H1 (cell line): ENCODE measurements at regions of chr19 and their contacts with region 1.

Region 1: DNA sequence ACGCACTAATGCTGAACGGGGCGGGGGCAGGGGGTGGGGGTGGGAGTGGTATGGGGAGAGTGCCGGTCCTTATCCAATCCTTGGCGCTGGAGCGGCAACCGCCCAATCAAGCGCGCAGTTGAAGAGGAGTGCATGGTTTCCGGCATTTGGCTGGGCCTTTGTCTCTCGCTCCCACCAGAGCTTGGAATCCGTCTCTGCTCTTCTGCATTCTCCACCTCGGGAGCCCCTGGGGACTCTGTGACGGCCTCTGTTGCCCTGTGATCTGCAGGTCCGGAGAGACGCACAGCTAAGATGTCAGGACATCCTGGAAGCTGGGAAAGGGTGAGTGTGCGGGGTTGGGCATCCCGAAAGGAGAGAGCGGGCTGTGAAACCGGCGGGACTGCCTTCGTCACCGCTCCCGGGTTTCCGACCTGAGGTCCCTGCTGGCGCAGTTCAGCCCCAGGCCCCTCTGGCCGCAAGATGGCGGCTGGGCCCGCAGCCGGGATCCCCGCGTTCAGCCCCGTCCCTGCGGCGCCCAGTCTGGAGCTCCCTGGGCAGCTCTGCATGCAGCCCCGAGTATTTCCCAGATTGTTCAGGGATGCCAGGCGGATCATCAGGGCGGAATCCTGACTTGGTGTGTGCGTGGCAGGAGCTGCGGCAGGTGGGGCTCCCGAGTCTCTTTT is 53.6 kb upstream of the ZNF254 start:
- DNase-seq: peak; percentile 70 to 84
- H3K4me3 ChIP-seq: peak overlapping the region; percentile 82 to 95 (median 88)
- H3K27ac ChIP-seq: peak overlapping the region; percentile 98
- H3K4me1 ChIP-seq: no peaks in the 10 kb centered on the region; a peak in 1 of 7 replicates
- H3K27me3 ChIP-seq: no peaks in the 10 kb centered on the region
- CTCF ChIP-seq: no peak
- EP300 ChIP-seq: no peak
- POLR2A ChIP-seq: peak; percentile 82 to 92
- RAD21 ChIP-seq: no peak

Region 2: DNA sequence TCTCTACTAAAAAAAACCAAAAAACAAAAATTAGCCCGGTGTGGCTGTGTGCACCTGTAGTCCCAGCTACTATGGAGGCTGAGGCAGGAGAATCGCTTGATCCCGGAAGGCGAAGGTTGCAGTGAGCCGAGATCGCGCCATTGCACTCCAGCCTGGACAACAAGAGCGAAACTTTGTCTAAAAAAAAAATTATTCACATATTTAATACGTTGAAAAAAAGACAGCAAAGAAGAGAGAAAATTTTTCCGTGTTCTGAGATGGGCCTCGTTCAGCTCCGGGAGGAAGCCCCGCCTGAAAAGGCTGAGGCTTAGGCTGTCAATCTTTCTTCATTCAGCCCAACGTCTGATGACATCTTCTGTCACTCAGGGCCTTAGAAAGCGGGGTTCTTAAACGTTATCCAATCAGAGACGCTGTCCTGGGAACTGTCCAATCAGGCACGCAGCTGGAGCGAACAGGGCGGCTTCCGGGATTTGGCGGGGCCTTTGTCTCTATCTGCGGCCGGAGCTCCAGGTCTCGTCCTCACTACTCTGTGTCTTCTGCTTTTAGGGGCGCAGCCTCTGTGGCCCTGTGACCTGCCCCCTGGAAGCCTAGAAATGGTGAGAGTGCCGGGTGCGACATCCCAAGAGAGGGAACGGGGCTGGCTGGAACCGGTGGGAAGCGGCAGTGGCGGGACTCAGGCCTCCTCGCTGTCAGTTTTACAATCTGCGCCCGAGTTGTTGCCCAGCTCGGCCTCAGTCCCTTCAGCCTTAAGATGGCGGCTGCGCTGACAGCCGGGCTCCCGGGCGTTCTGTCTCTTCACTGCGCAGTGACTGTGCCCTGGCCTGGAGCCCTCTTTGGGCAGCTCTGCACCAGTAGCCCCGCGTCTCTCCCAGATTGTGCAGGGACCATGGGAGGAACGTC is 118.8 kb before region 1 on chr19 and contains the start of gene ZNF726:
- CTCF ChIA-PET with region 1: no interaction called
- POLR2A ChIA-PET with region 1: interaction called, 11 read pairs
- DNase-seq: no peak
- H3K4me3 ChIP-seq: peak within 1 kb of the TSS in 1 of 4 experiments; percentile 47; a peak in 1 of 8 replicates
- H3K27ac ChIP-seq: no peak within 1 kb of the TSS
- H3K4me1 ChIP-seq: no peaks in the 10 kb centered on the region
- H3K27me3 ChIP-seq: no peaks in the 10 kb centered on the region
- CTCF ChIP-seq: no peak
- EP300 ChIP-seq: no peak
- POLR2A ChIP-seq: no peak
- RAD21 ChIP-seq: no peak
- total RNA-seq, gene ZNF726: not detected in 2 replicates

Region 3: DNA sequence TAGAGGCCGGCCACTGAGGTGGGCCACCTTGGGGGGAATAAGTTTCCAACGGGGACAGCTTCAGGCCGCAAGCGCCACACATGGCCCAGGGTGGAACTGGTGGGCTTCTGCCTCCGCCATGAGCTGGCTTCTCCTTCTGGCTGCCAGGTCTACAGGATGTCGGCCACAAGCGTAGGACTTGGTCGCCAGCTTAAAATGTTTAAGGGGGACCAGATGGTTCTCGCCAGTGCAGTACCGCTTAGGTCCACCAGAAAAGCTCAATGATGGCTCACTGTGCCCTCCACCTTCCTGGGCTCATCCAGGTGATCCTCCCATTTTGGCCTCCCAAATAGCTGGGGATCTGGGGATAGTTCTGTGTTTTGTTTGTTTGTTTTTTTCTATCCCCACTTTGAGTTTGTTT is 14.8 kb after region 1 on chr19:
- CTCF ChIA-PET with region 1: interaction called, 7 read pairs
- POLR2A ChIA-PET with region 1: interaction called, 29 read pairs
- DNase-seq: no peak
- H3K4me3 ChIP-seq: no peak overlapping the region
- H3K27ac ChIP-seq: no peak overlapping the region
- H3K4me1 ChIP-seq: no peaks in the 10 kb centered on the region
- H3K27me3 ChIP-seq: no peaks in the 10 kb centered on the region
- CTCF ChIP-seq: peak in 2 of 3 experiments; percentile 27 to 36; a peak in 2 of 4 replicates
- EP300 ChIP-seq: no peak
- POLR2A ChIP-seq: no peak
- RAD21 ChIP-seq: peak in 1 of 2 experiments; percentile 9; a peak in 1 of 4 replicates

Region 4: DNA sequence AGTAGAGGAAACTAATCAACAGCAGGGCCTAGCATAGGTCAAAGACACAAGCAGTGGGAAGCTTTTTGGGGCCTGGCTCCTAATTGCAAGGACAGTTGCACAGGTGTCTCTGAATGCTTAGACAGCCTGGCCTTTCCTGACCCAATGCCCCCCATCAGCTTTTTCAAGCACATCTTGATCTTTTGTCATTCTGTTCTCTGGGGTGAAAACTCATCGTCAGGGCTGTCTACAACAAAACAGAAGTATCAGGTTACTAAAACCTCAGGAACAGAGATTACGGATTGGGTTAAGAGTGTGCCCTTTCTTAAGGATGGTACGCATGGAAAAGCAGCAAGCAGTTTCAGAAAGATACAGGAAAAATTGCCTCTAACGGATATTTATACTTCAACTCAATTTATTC is 45.2 kb after region 1 on chr19:
- CTCF ChIA-PET with region 1: no interaction called
- POLR2A ChIA-PET with region 1: interaction called, 13 read pairs
- DNase-seq: peak in 1 of 2 experiments; percentile 10
- H3K4me3 ChIP-seq: peak overlapping the region in 3 of 4 experiments; percentile 1 to 46 (median 11); a peak in 1 of 8 replicates
- H3K27ac ChIP-seq: no peak overlapping the region; the same call in 1 of the 2 replicates
- H3K4me1 ChIP-seq: peaks cover 5 to 27% (median 13%) of the 10 kb centered on the region in 4 experiments
- H3K27me3 ChIP-seq: no peaks in the 10 kb centered on the region
- CTCF ChIP-seq: no peak
- EP300 ChIP-seq: no peak
- POLR2A ChIP-seq: no peak
- RAD21 ChIP-seq: no peak

Region 5: DNA sequence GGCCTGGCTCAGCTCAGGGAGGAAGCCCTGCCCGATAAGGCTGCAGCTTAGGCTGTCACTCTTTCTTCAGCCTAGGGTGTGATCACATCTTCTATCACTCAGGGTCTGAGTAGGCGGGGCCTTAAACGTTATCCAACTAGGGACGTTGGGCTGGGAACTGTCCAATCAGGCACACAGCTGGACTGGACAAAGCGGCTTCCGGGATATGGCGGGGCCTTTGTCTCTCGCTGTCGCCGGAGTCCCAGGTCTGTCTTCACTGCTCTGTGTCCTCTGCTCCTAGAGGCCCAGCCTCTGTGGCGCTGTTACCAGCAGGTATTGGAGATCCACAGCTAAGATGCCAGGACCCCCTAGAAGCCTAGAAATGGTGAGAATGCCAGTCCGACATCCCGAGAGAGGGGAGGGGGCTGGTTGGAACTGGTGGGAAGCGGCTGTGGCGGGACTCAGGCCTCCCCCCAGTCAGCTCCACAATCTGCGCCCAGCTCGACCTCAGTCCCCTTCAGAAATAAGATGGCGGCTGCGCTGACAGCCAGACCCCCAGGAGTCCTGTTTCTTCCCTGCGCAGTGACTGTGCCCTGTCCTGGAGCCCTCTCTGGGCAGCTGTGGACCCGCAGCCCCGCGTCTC is 53.7 kb after region 1 on chr19 and contains the start of gene ZNF254:
- CTCF ChIA-PET with region 1: no interaction called
- POLR2A ChIA-PET with region 1: interaction called, 26 read pairs
- DNase-seq: peak; percentile 72 to 82
- H3K4me3 ChIP-seq: peak within 1 kb of the TSS; percentile 55 to 94 (median 66)
- H3K27ac ChIP-seq: peak within 1 kb of the TSS; percentile 88
- H3K4me1 ChIP-seq: no peaks in the 10 kb centered on the region
- H3K27me3 ChIP-seq: no peaks in the 10 kb centered on the region
- CTCF ChIP-seq: no peak
- EP300 ChIP-seq: no peak
- POLR2A ChIP-seq: peak; percentile 22 to 89
- RAD21 ChIP-seq: no peak
- total RNA-seq, gene ZNF254: 21.7 and 22.0 TPM in 2 replicates